Activated CD4-positive, alpha-beta T cell treated with anti-CD3 and anti-CD28 coated beads for 36 hours (primary cell): ENCODE measurements at regions of chr16 and their contacts with region 1.

Region 1: GRCh38 chr16:75385507-75386152 is 47.7 kb downstream of the CFDP1 start:
- DNase-seq: no peak
- ATAC-seq: peak; percentile 47
- H3K4me3 Mint-ChIP-seq: no peak overlapping the region
- H3K27ac Mint-ChIP-seq: no peak overlapping the region
- H3K4me1 Mint-ChIP-seq: peaks cover 18% of the 10 kb centered on the region
- H3K27me3 Mint-ChIP-seq: peaks cover 2% of the 10 kb centered on the region

Region 2: DNA sequence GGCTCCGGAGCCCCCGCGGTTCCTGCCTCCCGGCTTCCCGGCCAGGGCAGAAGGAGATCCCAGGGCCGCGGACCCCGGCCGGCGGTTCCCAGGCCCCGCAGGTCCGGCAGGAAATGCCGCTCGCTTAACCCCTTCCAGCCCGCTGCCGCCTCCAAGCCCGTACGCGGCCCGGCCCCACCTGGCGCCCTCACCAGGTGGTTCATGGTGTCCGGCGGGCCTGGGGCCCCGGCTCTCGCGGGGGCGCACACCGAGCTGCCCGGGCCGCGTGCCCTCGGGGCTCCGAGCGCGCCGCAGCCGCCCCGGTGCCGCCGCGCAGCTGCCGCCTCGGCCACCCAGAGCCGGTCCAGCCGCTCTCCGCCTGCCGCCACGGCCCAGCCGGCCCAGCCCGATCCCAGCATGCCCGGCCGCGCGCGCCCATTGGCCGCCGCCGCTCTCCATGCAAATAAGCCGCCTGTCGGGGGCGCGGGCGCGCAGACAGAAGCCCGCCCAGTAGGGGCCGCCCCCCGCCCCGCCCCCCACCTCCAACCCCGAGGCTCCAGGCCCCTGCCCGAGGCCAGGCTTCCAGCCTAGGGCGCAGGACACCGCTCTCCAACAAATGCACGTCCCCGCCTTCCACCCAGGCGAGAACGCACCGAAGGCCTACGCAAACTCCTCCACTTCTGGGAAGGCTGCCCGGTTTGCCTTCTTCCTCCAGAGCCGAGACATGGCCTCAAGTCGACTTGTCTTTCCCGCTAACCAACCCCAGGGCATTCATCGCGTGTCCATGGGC is 134.2 kb before region 1 on chr16 and contains the start of gene BCAR1:
- CTCF ChIA-PET with region 1: interaction called, 3 read pairs
- POLR2A ChIA-PET with region 1: no interaction called
- intact Hi-C with region 1: loop called in 1 of 2 experiments (anchors 5 kb)
- DNase-seq: peak; percentile 44
- ATAC-seq: peak; percentile 54
- H3K4me3 Mint-ChIP-seq: peak within 1 kb of the TSS; percentile 29
- H3K27ac Mint-ChIP-seq: no peak within 1 kb of the TSS
- H3K4me1 Mint-ChIP-seq: peaks cover 6% of the 10 kb centered on the region
- H3K27me3 Mint-ChIP-seq: peaks cover 25% of the 10 kb centered on the region
- total RNA-seq, gene BCAR1: 0.98 to 1.7 TPM

Region 3: DNA sequence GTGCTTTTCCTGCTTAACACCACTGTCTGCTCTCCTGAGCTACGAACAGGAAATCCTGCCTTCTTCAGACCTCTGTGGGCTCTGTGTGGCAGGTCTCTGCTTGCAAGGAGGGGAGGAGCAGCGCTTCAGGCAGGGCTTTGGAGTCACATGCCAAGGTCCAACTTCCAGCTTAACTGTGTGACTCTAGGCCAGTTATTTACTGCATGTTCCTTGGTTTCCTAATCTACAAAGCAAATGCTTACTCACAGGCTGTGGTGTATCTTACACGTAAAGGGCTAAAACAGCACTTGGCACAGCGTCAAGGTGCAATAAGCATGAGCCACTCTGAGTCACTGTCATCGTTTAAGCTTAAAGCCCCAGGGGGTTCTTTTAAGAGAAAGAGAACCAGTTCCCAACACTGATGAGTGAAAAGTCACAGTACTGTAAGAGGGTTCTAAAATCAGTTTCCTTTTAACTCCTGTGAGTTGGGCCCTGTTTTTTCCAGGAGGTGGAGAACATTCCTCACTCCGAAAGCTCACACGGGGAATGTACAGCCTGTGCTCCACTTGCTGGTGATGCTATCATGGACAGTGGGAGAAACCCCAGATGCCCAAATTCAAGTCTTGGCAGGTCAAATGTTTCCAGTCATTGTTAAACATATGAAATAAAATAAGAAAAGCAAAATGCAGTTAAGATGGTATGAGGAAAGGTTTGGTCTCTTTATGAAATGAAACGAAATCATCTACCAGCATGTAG is 80.1 kb before region 1 on chr16:
- CTCF ChIA-PET with region 1: interaction called, 10 read pairs
- POLR2A ChIA-PET with region 1: no interaction called
- intact Hi-C with region 1: loop called in 1 of 2 experiments (anchors 2 kb)
- DNase-seq: peak; percentile 87
- ATAC-seq: peak; percentile 96
- H3K4me3 Mint-ChIP-seq: no peak overlapping the region
- H3K27ac Mint-ChIP-seq: peak overlapping the region; percentile 84
- H3K4me1 Mint-ChIP-seq: peaks cover 29% of the 10 kb centered on the region
- H3K27me3 Mint-ChIP-seq: no peaks in the 10 kb centered on the region